Left ventricle myocardium superior (tissue), 1 donor: ENCODE measurements at regions of chr9 and their contacts with region 1.

Region 1: GRCh38 chr9:22529426-22530199 is 83.0 kb downstream of the DMRTA1 start:
- DNase-seq: no peak
- ATAC-seq: no peak

Region 2: DNA sequence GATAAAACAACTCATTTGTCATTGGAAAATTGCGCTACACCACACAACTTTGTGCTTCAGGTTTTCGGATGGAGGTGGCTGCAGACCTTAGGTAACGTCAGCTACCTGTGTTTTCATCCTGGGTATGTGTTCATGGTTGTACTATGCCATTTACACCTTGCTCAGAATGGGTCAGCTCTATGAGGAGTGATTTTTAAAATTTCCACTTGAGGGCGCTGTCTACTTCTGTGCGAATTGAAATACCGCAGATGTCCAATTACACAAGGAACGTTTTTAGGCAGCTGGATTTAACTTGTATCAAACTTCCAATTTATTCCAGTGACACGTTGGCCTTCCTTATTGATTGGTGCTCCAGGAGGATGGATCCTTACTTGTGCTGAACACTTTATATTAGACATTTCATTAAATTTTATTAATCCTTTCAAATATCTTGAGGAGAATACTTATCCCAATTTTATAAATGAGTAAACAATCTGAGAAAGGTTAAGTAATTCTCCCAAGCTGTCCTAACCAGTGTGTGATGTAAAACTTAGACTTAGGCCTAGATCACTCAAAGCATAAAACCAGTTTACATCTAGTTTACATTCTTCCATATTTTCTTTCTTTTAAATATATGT is 59.6 kb before region 1 on chr9:
- intact Hi-C with region 1: loop called (anchors 10 kb)
- DNase-seq: no peak
- ATAC-seq: no peak